AG04449 (cell line): ENCODE measurements at regions of chr3 and their contacts with region 1.

Region 1: DNA sequence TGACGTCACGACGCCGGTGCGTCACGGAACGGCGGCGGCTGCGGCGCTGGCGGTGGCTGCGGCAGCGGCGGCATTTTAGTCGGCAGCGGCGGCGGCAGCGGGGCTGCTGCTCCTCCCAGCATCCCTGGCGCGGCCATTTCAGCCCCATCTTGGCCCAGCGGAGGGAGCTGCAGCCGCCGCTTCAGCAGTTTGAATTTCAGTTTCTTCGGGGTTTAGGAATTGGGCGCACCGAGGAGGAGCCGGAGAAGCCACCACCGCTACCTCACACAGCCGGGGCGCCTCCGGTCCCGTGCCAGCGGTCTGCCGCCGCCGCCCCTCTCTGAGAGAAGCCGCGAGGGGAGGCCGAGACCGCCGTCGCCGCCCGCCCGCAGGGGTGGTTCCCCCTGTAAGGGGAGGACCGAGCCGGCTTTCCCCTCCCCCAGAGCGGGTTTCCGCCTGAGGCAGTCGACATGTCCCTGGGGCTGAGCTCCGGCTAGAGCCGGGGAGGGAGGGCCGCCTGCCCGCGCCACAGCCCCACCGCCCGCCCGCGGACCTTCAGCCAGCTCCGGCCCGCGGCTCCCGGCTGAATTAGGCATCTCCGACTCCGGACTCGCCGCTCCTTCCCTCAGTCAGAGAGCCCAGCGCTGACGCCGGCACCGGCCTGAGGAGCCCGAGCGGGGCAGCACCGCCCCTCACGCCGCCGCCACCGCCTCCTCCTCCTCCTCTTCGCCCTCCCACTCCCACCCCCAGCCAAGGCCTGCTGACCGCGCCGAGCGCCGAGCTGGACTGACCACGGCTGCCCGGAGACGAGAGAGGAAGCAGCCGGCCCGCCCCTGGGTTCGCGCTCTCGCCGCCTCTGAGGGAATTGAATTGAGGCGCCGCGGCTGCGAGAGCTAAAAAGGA is at the start of gene TSC22D2:
- DNase-seq: no peak
- H3K4me3 ChIP-seq: peak within 1 kb of the TSS; percentile 97
- CTCF ChIP-seq: peak; percentile 26

Region 2: GRCh38 chr3:150227839-150228238 is 180.6 kb before region 1 on chr3:
- CTCF ChIA-PET with region 1: interaction called, 17 read pairs
- POLR2A ChIA-PET with region 1: interaction called, 9 read pairs
- DNase-seq: no peak
- H3K4me3 ChIP-seq: no peak overlapping the region
- CTCF ChIP-seq: peak; percentile 84

Region 3: DNA sequence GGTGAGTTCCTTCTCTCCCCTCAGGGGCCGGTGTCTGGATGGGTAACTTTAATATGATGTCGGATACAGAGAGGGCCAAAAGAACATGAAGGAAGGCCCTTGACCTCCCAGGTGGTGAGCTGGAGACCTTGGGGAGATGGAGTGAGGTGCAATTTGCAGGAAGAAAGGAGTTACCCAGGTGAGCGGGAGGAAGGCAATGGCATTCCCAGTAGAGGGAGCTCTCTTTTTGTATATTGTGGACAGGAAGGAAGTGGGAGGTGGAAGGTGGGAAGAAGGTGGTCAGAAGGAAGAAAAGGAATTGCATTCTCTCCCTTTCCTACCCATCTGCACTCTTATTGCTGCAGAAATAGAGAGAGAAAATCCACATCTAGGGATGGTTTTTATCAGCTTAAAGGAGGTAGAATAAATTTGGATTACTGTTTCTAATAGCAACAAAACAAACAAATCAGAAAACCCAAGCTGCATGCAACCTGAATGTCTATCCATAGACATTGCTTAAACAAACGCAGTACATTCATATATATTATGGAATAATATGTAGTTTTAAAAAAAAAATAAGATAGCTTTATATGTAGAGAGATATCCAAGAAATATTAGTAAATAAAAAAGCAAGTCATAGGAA is 169.4 kb before region 1 on chr3:
- CTCF ChIA-PET with region 1: interaction called, 7 read pairs
- POLR2A ChIA-PET with region 1: interaction called, 20 read pairs
- DNase-seq: no peak
- H3K4me3 ChIP-seq: no peak overlapping the region
- CTCF ChIP-seq: no peak

Region 4: DNA sequence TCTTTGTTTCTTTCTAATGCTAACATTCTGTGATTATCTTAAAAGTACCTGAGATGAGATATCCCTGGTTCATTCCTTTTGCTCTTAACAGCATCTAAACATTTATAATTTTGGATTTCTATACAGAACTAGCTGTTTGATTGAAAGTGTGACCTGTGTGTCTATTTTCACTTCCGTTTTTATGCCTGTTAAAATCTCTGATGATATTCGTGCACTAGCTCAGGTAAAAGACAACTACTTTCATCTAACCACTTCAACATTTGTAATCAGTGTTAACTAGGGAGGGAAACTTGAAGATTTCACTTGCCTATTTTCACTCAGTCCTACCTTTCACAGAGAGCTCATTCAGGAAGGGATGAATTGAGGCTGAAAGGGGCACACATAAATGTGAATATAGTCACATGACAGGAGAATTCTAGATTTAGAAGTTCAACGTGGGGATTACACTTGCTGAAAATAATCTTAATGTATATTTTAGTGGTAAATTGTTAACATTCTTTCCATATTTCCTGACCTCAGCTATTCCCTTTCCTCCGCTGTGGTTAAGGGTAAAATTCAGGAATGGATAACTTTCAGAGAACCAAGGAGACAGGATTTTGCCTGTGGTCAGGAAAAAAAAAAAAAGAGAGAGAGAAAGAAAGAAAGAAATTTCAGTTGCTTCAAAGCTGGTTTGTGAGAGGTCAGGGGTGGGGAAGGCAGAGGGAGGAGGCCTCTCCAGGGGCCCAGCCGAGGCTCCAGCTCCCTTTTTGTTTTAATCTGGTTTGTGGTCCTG is 160.2 kb before region 1 on chr3:
- CTCF ChIA-PET with region 1: interaction called, 5 read pairs
- POLR2A ChIA-PET with region 1: interaction called, 20 read pairs
- DNase-seq: peak; percentile 80
- H3K4me3 ChIP-seq: no peak overlapping the region
- CTCF ChIP-seq: no peak

Region 5: GRCh38 chr3:150293401-150294061 is 114.9 kb before region 1 on chr3:
- CTCF ChIA-PET with region 1: interaction called, 4 read pairs
- POLR2A ChIA-PET with region 1: interaction called, 24 read pairs
- DNase-seq: peak; percentile 88
- H3K4me3 ChIP-seq: no peak overlapping the region
- CTCF ChIP-seq: no peak

Region 6: GRCh38 chr3:150348500-150348899 is 60.0 kb before region 1 on chr3:
- CTCF ChIA-PET with region 1: interaction called, 4 read pairs
- POLR2A ChIA-PET with region 1: interaction called, 12 read pairs
- DNase-seq: peak; percentile 63
- H3K4me3 ChIP-seq: no peak overlapping the region
- CTCF ChIP-seq: no peak

Region 7: DNA sequence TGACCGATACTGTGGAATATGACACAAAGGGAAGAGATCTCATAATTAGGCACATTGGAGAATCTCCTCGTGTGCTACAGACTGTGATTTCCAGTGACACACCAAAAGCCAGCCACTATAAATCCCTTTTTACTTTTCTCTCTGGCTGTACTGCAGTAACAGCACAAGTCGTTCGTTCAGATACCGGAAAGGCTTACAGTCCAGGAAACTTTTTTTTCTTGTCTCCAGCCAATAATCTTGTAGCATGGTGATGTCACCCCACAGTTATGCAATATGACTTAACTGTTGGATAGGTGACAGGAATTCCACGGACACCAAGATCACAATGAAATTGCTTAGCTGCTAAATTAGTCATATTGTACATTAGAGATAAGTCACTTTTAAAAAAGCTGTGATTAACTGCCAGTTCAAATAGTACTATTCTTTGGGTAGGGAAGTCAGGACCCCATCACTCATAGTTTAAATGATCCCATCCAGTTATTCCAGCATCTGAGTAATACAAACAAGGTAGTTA is 36.7 kb before region 1 on chr3:
- CTCF ChIA-PET with region 1: no interaction called
- POLR2A ChIA-PET with region 1: interaction called, 10 read pairs
- DNase-seq: peak; percentile 97
- H3K4me3 ChIP-seq: peak overlapping the region; percentile 58
- CTCF ChIP-seq: no peak

Region 8: GRCh38 chr3:150737874-150738713 is 329.6 kb after region 1 on chr3:
- CTCF ChIA-PET with region 1: no interaction called
- POLR2A ChIA-PET with region 1: no interaction called
- DNase-seq: no peak
- H3K4me3 ChIP-seq: no peak overlapping the region
- CTCF ChIP-seq: no peak